ENCODE measurements at regions of chr11 and their contacts with region 1.

Region 1: DNA sequence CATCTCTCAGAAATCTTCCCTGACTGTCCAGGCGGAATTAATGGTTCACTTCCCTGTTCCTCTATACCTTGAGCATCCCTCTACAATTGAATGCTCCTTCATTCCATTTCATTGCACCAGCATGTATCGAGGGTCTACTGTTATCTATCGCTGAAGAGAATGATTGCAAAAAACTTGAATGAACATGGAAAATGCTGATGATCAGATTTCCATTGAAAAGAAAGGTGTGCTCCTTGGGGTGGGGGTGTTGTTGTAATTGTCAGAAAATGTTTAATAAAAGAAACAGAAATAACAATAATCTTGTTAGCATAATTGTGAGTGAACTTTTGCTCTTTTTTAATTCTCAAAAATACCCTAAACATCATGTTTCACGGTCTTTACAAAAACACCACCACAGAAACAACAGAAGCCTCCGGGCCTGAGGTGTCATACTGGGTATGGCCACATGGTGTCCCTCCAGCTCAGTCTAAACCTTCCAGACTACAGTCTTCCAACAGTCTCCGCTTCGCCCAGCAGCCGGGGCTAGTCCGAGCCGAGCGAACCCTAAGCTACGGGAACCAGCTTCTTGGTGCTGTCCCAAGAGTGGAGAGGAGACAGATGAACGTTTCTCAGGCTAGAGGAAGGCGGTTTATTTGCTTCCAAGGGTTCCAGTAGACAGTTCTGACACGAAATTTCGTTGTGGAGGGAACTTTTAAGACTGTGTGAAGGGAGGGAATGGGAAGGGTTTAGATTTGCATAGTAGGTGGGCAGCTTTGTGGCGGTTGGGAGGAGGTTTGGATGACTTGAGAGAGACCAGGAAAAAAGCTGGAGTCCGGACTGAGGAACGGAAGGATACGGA is 75.8 kb upstream of the ZBED5 start:
- DNase-seq: peak; percentile 94
- ATAC-seq: peak; percentile 78
- H3K4me3 Mint-ChIP-seq: peak overlapping the region; percentile 84
- H3K27ac Mint-ChIP-seq: peak overlapping the region; percentile 73
- H3K4me1 Mint-ChIP-seq: peaks cover 20% of the 10 kb centered on the region
- H3K27me3 Mint-ChIP-seq: peaks cover 20% of the 10 kb centered on the region
- CTCF ChIP-seq: peak; percentile 85

Region 2: GRCh38 chr11:10808553-10809372 is 124.9 kb before region 1 on chr11 and contains the start of gene EIF4G2:
- CTCF ChIA-PET with region 1: interaction called, 26 read pairs
- POLR2A ChIA-PET with region 1: interaction called, 46 read pairs
- DNase-seq: peak; percentile 97
- ATAC-seq: peak; percentile 95
- H3K4me3 Mint-ChIP-seq: peak within 1 kb of the TSS; percentile 90
- H3K27ac Mint-ChIP-seq: peak within 1 kb of the TSS; percentile 98
- H3K4me1 Mint-ChIP-seq: peaks cover 28% of the 10 kb centered on the region
- H3K27me3 Mint-ChIP-seq: no peaks in the 10 kb centered on the region
- CTCF ChIP-seq: no peak
- total RNA-seq, gene EIF4G2: 779 to 918 TPM (median 906 TPM) in 3 replicates

Region 3: DNA sequence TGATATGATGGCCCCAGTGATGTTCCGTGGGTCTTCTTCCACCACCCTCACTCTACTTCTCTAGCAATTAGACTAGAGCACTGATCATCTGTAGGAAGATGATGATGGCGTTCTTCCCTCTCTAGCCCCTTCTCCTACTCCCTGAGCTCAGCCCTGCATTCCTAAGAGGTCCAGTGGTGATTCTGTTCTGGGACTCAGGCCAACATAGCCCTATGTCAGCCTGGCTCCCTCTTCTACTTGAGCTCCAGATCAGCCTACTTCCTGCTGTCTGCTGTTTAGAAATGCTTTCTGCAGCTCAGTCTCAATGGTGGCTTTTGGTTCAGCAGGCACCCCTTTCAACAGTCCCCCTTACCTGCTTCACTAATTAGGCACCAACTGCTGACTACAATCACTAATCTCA is 10.3 kb after region 1 on chr11:
- CTCF ChIA-PET with region 1: interaction called, 33 read pairs
- POLR2A ChIA-PET with region 1: interaction called, 3 read pairs
- DNase-seq: no peak
- ATAC-seq: no peak
- H3K4me3 Mint-ChIP-seq: no peak overlapping the region
- H3K27ac Mint-ChIP-seq: no peak overlapping the region
- H3K4me1 Mint-ChIP-seq: no peaks in the 10 kb centered on the region
- H3K27me3 Mint-ChIP-seq: no peaks in the 10 kb centered on the region; the same call in 1 of the 2 replicates
- CTCF ChIP-seq: no peak

Region 4: GRCh38 chr11:11010624-11011127 is 77.0 kb after region 1 on chr11:
- CTCF ChIA-PET with region 1: interaction called, 86 read pairs
- POLR2A ChIA-PET with region 1: interaction called, 6 read pairs
- DNase-seq: peak; percentile 47
- ATAC-seq: peak; percentile 92
- H3K4me3 Mint-ChIP-seq: peak overlapping the region; percentile 38
- H3K27ac Mint-ChIP-seq: no peak overlapping the region
- H3K4me1 Mint-ChIP-seq: peaks cover 21% of the 10 kb centered on the region
- H3K27me3 Mint-ChIP-seq: peaks cover 5% of the 10 kb centered on the region
- CTCF ChIP-seq: no peak

Region 5: DNA sequence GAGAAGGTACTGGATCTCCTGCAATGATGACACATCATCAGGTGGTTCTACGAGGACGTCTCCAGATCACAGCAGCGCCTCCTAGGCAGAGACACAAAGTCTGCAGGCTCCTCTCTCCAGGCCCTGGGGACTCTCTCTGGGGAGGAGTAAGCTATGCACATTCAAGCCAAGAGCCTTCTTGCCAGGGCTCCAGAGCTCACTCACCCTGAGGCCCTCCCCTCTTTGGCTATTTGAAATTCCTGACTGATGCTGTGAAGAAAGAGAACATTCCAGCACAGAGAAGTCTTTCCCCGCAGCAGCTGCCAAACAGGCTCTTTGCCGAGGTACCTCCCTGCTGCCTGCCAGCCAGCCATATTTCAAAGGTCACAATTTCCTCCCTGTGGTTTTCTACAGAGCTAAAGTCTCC is 214.4 kb after region 1 on chr11:
- CTCF ChIA-PET with region 1: interaction called, 12 read pairs
- POLR2A ChIA-PET with region 1: no interaction called
- DNase-seq: peak; percentile 66
- ATAC-seq: peak; percentile 99
- H3K4me3 Mint-ChIP-seq: no peak overlapping the region
- H3K27ac Mint-ChIP-seq: peak overlapping the region; percentile 68; the same call in 1 of the 2 replicates
- H3K4me1 Mint-ChIP-seq: peaks cover 15% of the 10 kb centered on the region
- H3K27me3 Mint-ChIP-seq: peaks cover 3% of the 10 kb centered on the region
- CTCF ChIP-seq: no peak